ENCODE measurements at regions of chr1 and their contacts with region 1.

Region 1: DNA sequence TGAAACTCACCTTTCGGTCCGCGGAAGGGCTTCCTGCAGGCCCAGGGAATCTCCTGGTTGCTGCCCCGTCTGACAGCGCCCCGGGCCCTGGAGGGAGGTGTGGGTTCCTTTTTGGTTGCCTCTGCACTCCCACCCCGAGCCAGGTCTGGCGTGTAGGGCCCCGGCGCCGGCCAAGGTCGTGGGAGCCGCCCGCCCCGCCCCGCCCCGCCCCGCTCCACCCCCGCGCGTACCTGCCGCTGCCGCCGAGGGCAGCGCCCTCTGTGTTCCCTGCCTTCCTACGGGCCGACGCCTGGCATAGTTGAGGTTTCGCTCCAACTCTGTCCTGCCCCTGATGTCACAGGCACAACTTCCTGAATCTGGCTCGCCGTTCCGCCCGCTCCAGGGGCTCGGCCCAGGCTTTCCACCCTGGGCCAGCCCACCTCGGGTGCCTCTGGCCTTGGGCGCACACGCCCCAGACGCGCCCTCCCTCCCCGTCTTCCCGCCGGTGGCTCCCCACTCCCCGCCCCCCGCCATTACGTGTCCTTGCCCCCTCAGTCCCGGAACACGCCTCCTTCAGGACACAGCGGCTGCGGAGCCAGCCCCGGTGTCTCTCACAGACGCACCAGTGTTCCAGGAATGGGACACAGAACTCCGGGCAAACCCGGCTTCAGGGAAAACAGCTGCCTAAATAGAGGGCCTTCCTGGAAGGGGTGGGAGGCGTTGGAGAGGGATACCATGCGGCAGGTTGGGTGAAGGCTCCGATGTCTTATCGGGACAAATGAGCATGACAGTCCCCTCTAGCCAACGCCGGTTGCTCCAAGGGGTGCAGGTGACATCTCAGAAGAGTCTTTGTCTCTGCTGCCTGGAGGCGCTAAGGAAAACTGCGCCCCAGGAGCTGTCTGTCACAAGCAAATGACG is at the start of gene KIAA0040:
- DNase-seq: peak; percentile 51
- H3K4me3 Mint-ChIP-seq: peak within 1 kb of the TSS; percentile 95
- H3K27ac Mint-ChIP-seq: peak within 1 kb of the TSS; percentile 92
- H3K4me1 Mint-ChIP-seq: peaks cover 55% of the 10 kb centered on the region
- H3K27me3 Mint-ChIP-seq: no peaks in the 10 kb centered on the region
- total RNA-seq, gene KIAA0040: 30.0 and 35.3 TPM in 2 replicates

Region 2: DNA sequence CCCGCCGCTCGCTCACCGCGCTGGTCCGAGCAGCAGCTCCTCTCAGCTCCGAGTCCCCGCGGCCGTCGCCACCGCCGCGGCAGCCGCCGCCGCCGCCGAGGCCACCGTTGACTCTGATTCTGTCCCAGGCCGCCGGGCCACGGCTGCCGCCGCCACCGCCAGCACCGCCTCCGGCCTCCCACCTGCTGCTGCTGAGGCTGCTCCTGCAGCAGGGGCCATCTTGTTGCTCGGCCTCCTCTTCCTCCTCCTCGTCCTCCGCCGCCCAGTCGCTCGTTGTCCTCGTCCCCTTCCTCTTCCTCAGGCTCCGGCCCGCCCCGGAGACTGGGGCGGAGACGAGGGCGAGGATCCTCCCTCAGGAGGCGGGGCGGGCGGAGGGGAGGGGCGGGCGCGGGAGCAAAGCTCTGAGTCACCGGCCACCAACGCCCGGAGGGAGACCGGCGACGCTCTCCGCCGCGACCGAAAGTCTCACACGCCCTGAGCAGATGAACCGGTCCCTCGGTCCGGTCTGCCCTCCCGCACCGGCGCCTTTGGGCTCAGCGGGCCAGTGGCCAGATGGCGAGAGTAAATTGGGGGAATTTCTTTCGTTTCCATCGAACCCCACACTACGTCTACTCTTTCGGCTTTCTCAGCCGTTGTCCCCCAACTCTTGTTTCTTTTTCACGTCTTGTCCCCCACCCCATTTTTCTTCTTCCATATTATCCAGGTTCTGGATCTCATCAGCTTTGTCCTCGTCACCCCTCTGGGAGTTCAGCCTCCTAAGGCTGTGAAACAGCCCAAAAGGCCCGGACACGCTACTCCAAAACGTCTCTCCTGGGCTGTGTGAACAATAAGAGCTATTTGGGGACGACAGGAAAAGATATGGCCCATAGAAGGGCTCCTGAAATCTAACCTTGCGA is 1170.5 kb before region 1 on chr1 and contains the start of gene RC3H1:
- intact Hi-C with region 1: loop called (anchors 5 kb)
- DNase-seq: peak; percentile 85
- H3K4me3 Mint-ChIP-seq: peak within 1 kb of the TSS; percentile 99
- H3K27ac Mint-ChIP-seq: peak within 1 kb of the TSS; percentile 90
- H3K4me1 Mint-ChIP-seq: peaks cover 35% of the 10 kb centered on the region
- H3K27me3 Mint-ChIP-seq: peaks cover 2% of the 10 kb centered on the region
- total RNA-seq, gene RC3H1: 30.4 and 33.5 TPM in 2 replicates

Region 3: DNA sequence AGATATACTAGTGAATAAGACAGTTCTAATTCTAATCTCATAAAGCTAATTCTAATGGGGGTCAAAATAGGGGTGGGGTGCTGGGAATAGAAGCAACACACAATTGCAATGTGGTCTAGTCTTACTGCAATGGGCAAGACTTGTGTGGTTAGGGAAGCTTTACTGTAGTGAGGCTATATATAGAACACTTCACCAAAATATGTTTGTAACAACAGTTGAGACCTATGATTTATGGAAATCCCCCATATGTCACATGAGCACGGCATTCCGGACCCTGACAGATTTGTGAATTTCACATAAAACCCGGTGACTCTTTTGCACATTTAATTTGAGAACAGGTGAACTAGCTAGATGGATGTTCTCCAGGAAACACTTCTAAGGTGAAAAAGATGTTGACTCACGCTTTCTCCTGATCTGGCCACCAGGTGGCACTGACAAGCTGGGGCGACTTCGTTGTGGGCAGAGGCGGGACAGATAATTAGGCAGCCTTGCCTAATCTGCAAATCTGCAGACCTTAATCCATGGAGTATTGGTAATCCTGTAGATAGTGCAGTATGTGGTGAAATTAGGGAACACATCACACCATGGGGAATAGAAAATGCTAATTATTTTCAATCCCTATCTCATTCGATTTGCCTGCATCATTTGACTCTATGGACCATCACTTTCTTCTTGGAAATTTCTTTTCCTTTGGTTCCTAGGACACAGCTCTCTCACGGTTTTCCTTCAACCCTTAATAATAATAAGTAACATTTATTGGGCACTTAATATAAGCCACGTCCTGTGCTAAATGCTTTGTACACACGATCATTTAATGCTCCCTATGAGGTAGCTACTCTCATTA is 38.0 kb before region 1 on chr1:
- intact Hi-C with region 1: loop called (anchors 1 kb)
- DNase-seq: peak; percentile 59
- H3K4me3 Mint-ChIP-seq: no peak overlapping the region
- H3K27ac Mint-ChIP-seq: no peak overlapping the region
- H3K4me1 Mint-ChIP-seq: peaks cover 22% of the 10 kb centered on the region
- H3K27me3 Mint-ChIP-seq: peaks cover 36% of the 10 kb centered on the region

Region 4: GRCh38 chr1:175208773-175209492 is 16.1 kb after region 1 on chr1:
- intact Hi-C with region 1: loop called (anchors 1 kb)
- DNase-seq: peak; percentile 60
- H3K4me3 Mint-ChIP-seq: peak overlapping the region; percentile 78
- H3K27ac Mint-ChIP-seq: peak overlapping the region; percentile 98
- H3K4me1 Mint-ChIP-seq: peaks cover 72% of the 10 kb centered on the region
- H3K27me3 Mint-ChIP-seq: no peaks in the 10 kb centered on the region

Region 5: GRCh38 chr1:175237389-175237788 is 44.5 kb after region 1 on chr1:
- intact Hi-C with region 1: loop called (anchors 5 kb)
- DNase-seq: no peak
- H3K4me3 Mint-ChIP-seq: peak overlapping the region; percentile 3
- H3K27ac Mint-ChIP-seq: peak overlapping the region; percentile 6
- H3K4me1 Mint-ChIP-seq: peaks cover 29% of the 10 kb centered on the region
- H3K27me3 Mint-ChIP-seq: peaks cover 2% of the 10 kb centered on the region